A549 (cell line): ENCODE measurements at regions of chr19 and their contacts with region 1.

Region 1: DNA sequence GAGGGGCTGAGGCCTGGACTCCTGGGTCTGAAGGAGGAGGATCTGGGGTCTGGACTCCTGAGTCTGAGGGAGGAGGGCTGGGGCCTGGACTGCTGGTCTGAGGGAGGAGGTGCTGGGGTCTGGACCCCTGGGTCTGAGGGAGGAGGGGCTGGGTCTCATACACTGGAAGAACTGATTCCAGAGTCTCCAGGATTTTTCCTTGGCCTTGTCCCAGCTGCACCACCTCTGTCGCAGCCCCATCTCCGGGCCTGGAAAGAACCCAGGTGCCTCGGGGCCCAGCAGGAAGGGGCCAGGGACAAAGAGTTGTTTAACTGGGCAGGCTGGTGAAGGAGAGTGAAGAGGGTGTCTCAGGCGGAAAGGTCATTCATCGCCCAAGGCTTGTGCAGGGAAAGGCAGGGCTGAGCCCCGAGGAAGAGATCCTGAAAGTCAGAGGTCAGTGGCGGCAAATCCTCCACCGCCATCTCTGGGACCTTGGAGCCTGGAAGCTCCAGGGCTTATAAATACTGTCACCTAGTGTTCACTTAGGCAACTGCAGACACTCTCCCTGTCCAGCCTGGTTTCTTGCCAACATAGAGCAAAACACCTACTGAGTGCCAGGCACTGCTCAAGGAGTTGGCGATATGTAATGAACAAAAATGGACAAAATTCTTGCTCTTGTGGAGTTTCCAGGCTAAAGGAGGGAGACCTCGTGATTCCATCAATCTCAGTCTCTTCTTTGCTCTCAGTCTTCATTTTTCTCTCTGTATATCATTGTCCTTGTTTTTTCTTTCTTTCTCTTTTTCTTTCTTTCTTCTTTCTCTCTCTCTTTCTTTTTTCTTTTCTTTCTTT is 4.4 kb upstream of the KCNN4 start:
- DNase-seq: peak; percentile 81 to 90
- ATAC-seq: peak; percentile 66 to 82
- H3K4me3 ChIP-seq: 0 out of 3 replicates have a peak overlapping the region, but pooled peaks have one; percentile 3
- H3K27ac ChIP-seq: peak overlapping the region; percentile 93 to 95
- H3K4me1 ChIP-seq: peaks cover 50% of the 10 kb centered on the region
- CTCF ChIP-seq: peak; percentile 99
- EP300 ChIP-seq: no peak
- POLR2A ChIP-seq: no peak
- RAD21 ChIP-seq: peak; percentile 99 to 100

Region 2: GRCh38 chr19:43738780-43739211 is 46.4 kb before region 1 on chr19:
- CTCF ChIA-PET with region 1: interaction called, 103 read pairs
- POLR2A ChIA-PET with region 1: interaction called, 3 read pairs
- DNase-seq: peak in 1 of 2 experiments; percentile 45
- ATAC-seq: peak in 1 of 2 experiments; percentile 71; a peak in 3 of 6 replicates
- H3K4me3 ChIP-seq: no peak overlapping the region
- H3K27ac ChIP-seq: peak overlapping the region; percentile 60 to 73; a peak in 4 of 6 replicates
- H3K4me1 ChIP-seq: peaks cover 28% of the 10 kb centered on the region
- CTCF ChIP-seq: no peak
- EP300 ChIP-seq: no peak
- POLR2A ChIP-seq: no peak
- RAD21 ChIP-seq: no peak

Region 3: GRCh38 chr19:43747557-43748204 is 37.5 kb before region 1 on chr19:
- CTCF ChIA-PET with region 1: interaction called, 565 read pairs
- POLR2A ChIA-PET with region 1: interaction called, 4 read pairs
- DNase-seq: no peak
- ATAC-seq: 0 out of 6 replicates have a peak, but pooled peaks of 1 of the 2 experiments have one; percentile 26
- H3K4me3 ChIP-seq: no peak overlapping the region
- H3K27ac ChIP-seq: no peak overlapping the region
- H3K4me1 ChIP-seq: peaks cover 13% of the 10 kb centered on the region
- CTCF ChIP-seq: no peak
- EP300 ChIP-seq: no peak
- POLR2A ChIP-seq: no peak
- RAD21 ChIP-seq: no peak

Region 4: GRCh38 chr19:43754503-43755255 is 30.5 kb before region 1 on chr19 and contains the start of gene SMG9:
- CTCF ChIA-PET with region 1: interaction called, 565 read pairs
- POLR2A ChIA-PET with region 1: interaction called, 19 read pairs
- DNase-seq: peak; percentile 99
- ATAC-seq: peak; percentile 85 to 89
- H3K4me3 ChIP-seq: peak within 1 kb of the TSS; percentile 75
- H3K27ac ChIP-seq: peak within 1 kb of the TSS; percentile 94 to 99
- H3K4me1 ChIP-seq: peaks cover 61% of the 10 kb centered on the region
- CTCF ChIP-seq: no peak
- EP300 ChIP-seq: 0 out of 5 replicates have a peak, but pooled peaks of 1 of the 2 experiments have one; percentile 12
- POLR2A ChIP-seq: peak; percentile 61
- RAD21 ChIP-seq: no peak; a peak in 1 of 5 replicates
- polyA plus RNA-seq, gene SMG9: 14.2 and 24.4 TPM in 2 replicates

Region 5: DNA sequence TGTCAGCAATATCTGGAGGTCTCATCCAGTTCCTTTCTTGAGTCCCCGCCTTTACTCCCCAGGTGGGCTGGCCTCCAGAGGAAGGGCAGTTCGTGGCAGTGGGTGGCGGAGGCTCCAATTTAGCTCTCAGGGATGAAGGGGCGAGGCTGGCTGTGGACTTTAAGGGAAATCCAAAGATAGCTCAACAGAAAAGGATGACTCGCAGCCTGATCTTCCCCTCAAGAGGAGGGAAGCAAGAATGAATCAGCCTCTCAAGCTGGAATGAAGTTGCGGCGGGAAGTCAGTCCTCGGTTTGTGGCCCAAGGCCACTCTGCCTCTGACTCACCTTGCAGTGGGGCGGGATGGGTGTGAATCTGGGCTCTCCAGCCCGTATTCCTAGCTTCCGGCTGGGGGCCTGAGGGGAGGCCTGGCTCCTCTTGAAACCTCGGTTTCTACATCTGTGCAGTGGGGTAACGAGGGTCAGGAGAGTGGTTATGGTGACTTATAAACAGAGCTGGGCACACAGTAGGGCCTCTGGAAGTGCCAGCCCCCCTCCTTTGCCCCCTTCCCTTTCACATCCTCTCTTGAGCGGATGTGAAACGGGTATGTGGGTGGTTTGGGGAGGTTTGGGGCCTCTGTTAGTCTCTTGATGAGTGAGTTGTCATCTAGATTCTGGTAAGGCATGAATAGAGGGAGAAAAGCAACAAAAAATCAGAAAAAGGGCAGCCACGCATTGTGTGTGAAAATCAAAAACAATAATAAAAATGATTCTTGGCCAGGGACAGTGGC is 19.9 kb before region 1 on chr19:
- CTCF ChIA-PET with region 1: interaction called, 565 read pairs
- POLR2A ChIA-PET with region 1: interaction called, 13 read pairs
- DNase-seq: peak; percentile 93 to 95
- ATAC-seq: peak; percentile 92 to 94
- H3K4me3 ChIP-seq: 0 out of 3 replicates have a peak overlapping the region, but pooled peaks have one; percentile 2
- H3K27ac ChIP-seq: peak overlapping the region; percentile 90 to 92
- H3K4me1 ChIP-seq: peaks cover 38% of the 10 kb centered on the region
- CTCF ChIP-seq: no peak
- EP300 ChIP-seq: peak in 1 of 2 experiments; percentile 44; a peak in 1 of 5 replicates
- POLR2A ChIP-seq: no peak
- RAD21 ChIP-seq: peak; percentile 7 to 24; a peak in 2 of 5 replicates

Region 6: DNA sequence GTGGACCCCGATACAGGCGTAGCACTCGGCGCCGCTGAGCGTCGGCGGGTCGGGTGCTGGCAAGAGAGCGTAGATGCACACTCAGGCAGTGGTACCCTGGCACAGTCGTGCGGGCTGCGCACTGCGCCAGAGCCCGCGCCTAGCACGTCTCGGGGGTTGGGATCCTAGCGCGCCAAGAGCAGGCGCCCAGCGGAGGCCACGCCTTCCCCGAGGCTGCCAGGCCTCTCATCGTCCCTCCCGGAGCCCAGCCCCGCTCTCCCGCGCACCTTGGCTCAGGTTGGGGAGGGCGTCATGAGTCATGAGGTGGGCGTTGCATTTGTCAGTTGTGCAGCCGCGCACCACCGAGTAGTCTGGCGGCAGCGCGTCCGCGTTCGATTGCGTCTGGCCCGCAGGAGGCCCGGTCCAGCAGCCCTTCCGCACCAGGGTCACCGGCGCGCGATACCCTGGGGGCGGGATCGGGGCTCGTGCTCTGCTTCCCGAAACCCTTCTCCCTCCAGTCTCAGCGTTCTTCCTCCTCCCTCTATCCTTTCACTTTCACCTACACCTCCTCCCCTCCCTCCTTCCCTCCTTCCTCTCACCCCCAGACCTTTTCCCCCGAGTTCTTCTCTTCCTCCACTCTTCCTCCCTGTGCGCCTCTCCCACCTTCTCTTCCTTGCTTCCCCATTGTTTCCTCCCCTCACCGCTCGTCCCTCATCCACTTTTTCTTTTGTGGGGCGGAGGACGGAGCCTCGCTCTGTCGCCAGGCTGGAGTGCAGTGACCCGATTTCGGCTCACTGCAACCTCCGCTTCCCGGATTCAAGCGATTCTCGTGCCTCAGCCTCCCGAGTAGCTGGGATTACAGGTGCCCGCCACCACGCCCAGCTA is 13.6 kb after region 1 on chr19:
- CTCF ChIA-PET with region 1: interaction called, 10 read pairs
- POLR2A ChIA-PET with region 1: no interaction called
- DNase-seq: peak in 1 of 2 experiments; percentile 30
- ATAC-seq: peak; percentile 37 to 75; a peak in 5 of 6 replicates
- H3K4me3 ChIP-seq: peak overlapping the region; percentile 40
- H3K27ac ChIP-seq: peak overlapping the region in 1 of 2 experiments; percentile 12; a peak in 2 of 6 replicates
- H3K4me1 ChIP-seq: 0 out of 3 replicates have a peak, but pooled peaks cover 4% of the 10 kb centered on the region
- CTCF ChIP-seq: no peak
- EP300 ChIP-seq: no peak
- POLR2A ChIP-seq: no peak
- RAD21 ChIP-seq: no peak